GM10248 (cell line): ENCODE measurements at regions of chr1 and their contacts with region 1.

Region 1: DNA sequence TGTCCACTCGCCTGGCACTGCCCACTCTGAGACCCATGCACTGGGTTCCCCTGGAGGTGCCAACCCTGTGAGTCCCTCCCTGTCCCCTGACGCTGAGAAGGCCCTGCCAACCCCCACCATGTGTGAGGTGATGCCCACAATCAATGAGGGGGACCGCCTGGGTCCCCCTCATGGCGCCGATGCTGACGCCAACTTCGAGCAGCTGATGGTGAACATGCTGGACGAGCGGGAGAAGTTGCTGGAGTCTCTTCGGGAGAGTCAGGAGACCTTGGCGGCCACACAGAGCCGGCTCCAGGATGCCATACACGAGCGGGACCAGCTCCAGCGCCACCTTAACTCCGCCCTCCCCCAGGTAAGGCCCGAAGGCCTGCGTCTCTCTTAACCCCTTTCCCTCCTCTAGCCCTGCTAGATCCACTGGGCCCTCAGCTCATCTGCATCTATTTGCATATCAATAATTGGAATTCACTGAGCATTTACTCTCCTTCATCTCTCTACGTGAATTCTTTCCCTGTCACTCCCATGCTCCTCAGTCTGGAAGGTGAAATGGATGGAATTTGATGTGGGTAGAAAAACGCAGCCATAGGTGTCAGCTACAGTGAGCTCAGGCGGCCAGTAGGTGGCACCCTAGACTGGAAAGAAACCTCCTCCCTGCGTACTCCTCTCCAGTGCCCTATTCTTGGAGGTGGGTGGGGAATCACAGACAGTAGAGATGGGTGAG is 12.8 kb downstream of the PPFIA4 start:
- DNase-seq: peak; percentile 77
- CTCF ChIP-seq: peak; percentile 90

Region 2: GRCh38 chr1:202892511-202892910 is 146.5 kb before region 1 on chr1:
- CTCF ChIA-PET with region 1: no interaction called
- POLR2A ChIA-PET with region 1: no interaction called
- DNase-seq: no peak
- CTCF ChIP-seq: no peak

Region 3: DNA sequence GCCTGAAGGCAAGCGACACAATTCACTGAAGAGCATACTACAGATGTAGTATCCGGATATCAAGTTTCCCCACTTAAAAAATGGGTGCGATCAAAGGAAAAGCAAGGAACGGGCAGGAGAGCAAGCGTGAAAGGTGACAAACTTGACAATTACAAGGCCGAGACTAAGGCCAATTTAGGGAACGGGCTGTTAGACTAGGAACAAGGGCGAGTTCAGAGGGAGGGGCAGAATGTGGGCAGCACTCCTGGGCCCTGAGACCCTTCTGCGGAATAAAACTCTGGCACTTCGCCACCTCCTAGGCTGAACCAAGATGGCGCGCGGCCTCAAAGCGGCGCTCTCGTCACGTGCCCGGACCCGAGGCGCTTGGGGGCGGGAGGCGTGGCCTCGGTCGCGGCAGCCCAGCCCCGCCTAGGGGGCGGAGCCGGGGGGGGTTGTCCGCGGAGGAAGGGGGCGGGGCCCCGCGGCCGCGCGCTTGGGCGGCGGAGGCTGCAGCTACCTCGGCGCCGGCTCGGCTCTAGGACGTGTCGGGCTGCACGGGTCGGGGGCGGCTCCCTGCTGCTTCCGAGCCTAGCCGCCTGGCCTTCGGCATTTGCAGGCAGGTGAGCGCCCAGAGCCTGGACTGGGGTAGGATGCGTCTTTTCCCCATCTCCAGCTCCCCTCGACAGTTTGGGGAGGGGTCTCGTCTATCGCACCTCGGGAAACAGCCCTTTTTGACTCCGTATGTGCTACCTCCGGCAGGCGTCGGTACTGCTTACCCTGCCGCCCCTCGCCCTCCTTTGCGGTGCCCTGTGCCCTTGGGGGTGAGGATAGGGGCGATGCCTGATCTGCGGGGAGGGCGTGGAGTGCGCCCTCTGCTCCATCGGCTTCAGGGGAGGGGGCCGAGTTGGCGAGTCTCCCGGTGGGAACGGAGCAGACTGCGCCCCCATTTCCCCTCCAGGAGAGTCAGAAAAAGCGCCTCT is 12.7 kb before region 1 on chr1 and contains the start of gene PPFIA4:
- CTCF ChIA-PET with region 1: interaction called, 85 read pairs
- POLR2A ChIA-PET with region 1: interaction called, 4 read pairs
- DNase-seq: peak; percentile 98
- CTCF ChIP-seq: no peak

Region 4: DNA sequence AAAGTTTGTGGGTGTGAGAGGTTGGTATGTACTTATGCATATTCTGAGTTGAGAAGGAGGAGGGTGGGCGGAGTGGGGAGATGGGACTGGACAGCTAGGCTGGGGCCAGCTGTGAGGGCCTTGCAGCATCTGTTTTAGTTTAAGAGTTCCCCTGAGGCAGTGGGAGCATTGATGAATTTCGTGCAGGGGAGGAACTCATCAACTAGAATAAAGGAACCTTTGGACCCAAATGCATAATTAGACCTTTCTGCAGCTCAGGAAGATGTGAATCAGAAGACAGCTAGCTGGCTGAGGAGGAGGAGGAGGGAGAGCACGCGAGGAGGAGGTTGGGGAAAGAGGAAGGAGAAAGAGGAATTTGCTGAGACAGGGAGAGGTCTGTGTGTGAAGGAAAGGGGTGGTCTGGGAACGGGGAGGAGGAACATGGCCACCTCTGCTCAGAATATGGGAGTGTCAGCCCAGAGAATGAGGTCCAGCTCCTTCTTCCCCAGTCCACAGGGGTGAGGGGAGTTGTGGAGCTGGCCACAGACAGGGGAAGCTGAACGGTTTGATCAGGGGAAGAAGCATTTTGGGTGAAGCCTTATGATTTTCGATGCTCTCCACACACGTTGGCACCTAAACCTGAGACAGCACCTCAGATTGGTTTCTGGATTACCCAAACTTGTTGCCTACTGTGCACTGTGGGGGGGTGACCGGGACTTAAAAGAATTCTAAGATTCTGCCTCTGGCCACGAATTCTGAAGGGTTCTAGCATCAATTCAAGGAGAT is 19.0 kb after region 1 on chr1:
- CTCF ChIA-PET with region 1: interaction called, 77 read pairs
- POLR2A ChIA-PET with region 1: no interaction called
- DNase-seq: no peak
- CTCF ChIP-seq: no peak

Region 5: DNA sequence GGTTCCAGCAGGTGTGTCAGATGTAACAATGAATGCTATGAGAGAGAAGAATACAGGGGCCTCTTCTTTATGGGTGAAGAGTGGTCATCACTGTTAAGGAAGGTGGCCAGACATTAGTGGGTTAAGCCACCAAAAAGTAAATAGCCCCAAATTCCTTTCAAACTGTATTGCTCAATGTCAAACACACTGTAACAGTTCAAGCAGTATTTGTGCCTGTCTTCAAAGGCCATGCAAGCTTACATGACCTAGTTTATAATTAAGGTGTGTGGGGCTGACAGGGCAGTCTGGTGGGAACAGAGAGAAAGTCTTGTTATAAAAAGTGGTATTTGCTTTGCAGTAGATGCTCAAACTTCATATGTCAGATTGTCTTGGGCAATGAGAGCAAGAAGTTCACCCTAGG is 171.9 kb after region 1 on chr1:
- CTCF ChIA-PET with region 1: interaction called, 174 read pairs
- POLR2A ChIA-PET with region 1: no interaction called
- DNase-seq: no peak
- CTCF ChIP-seq: no peak

Region 6: GRCh38 chr1:203229471-203230135 is 190.6 kb after region 1 on chr1 and contains the start of gene CHIT1:
- CTCF ChIA-PET with region 1: interaction called, 12 read pairs
- POLR2A ChIA-PET with region 1: interaction called, 4 read pairs
- DNase-seq: peak; percentile 9
- CTCF ChIP-seq: no peak